HEK293 (cell line): ENCODE measurements at regions of chr12 and their contacts with region 1.

Region 1: GRCh38 chr12:87274594-87275245 is 754.5 kb downstream of the C12orf50 start:
- H3K4me3 ChIP-seq: no peak overlapping the region
- H3K27ac ChIP-seq: no peak overlapping the region
- H3K4me1 ChIP-seq: no peaks in the 10 kb centered on the region
- CTCF ChIP-seq: no peak

Region 2: GRCh38 chr12:87848248-87848868 is 573.6 kb after region 1 on chr12:
- CTCF ChIA-PET with region 1: interaction called, 22 read pairs
- POLR2A ChIA-PET with region 1: no interaction called
- H3K4me3 ChIP-seq: no peak overlapping the region
- H3K27ac ChIP-seq: no peak overlapping the region
- H3K4me1 ChIP-seq: no peaks in the 10 kb centered on the region
- CTCF ChIP-seq: 0 out of 2 replicates have a peak, but pooled peaks have one; percentile 19